ENCODE measurements at regions of chr9 and their contacts with region 1.

Region 1: GRCh38 chr9:90914868-90915483 is 113.4 kb downstream of the SYK start:
- DNase-seq: no peak
- H3K4me3 ChIP-seq: no peak overlapping the region
- CTCF ChIP-seq: peak; percentile 83

Region 2: GRCh38 chr9:90665072-90665471 is 249.9 kb before region 1 on chr9:
- CTCF ChIA-PET with region 1: no interaction called
- POLR2A ChIA-PET with region 1: no interaction called
- DNase-seq: no peak
- H3K4me3 ChIP-seq: no peak overlapping the region
- CTCF ChIP-seq: no peak

Region 3: GRCh38 chr9:90684736-90685135 is 230.2 kb before region 1 on chr9:
- CTCF ChIA-PET with region 1: no interaction called
- POLR2A ChIA-PET with region 1: no interaction called
- DNase-seq: no peak
- H3K4me3 ChIP-seq: no peak overlapping the region
- CTCF ChIP-seq: no peak

Region 4: GRCh38 chr9:90904714-90905478 is 10.1 kb before region 1 on chr9:
- CTCF ChIA-PET with region 1: interaction called, 24 read pairs
- POLR2A ChIA-PET with region 1: no interaction called
- DNase-seq: no peak
- H3K4me3 ChIP-seq: no peak overlapping the region
- CTCF ChIP-seq: no peak

Region 5: DNA sequence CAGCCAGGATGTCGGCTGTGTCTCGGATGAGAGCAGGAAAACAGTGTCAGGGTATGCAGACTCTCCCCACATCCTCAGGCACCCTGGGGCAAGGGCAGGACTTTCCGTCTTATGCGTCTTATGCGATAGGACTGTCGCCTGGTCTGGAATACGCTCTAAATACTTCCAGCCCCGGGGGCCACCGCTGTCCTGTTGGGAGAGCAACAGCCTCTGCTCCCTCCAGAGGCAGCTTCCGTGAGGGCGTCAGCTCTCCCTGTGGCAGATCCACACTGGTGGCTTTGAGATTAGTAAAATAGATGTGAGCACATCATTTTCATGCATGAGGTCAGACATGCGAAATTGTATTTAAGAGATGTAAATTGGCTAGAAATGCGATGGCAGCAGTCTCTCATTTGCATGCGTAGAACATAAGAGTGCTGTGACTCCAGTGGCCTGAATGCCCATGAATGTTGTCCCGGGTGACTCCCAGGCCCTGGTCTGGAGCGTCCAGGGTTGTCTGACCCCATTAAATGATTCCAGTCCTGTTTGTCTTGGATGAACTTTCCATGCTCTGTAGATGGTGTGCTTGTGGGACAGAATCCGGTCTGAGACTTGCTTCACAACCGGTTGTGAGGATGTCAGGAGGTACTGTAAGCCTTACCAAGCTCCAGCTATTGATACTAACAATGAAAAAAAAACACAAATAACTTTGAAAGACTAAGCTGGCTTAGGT is 114.8 kb after region 1 on chr9:
- CTCF ChIA-PET with region 1: interaction called, 28 read pairs
- POLR2A ChIA-PET with region 1: no interaction called
- DNase-seq: no peak
- H3K4me3 ChIP-seq: no peak overlapping the region
- CTCF ChIP-seq: no peak

Region 6: GRCh38 chr9:91422758-91423711 is 508.1 kb after region 1 on chr9:
- CTCF ChIA-PET with region 1: interaction called, 200 read pairs
- POLR2A ChIA-PET with region 1: no interaction called
- DNase-seq: no peak
- H3K4me3 ChIP-seq: peak overlapping the region; percentile 87
- CTCF ChIP-seq: peak; percentile 44

Region 7: DNA sequence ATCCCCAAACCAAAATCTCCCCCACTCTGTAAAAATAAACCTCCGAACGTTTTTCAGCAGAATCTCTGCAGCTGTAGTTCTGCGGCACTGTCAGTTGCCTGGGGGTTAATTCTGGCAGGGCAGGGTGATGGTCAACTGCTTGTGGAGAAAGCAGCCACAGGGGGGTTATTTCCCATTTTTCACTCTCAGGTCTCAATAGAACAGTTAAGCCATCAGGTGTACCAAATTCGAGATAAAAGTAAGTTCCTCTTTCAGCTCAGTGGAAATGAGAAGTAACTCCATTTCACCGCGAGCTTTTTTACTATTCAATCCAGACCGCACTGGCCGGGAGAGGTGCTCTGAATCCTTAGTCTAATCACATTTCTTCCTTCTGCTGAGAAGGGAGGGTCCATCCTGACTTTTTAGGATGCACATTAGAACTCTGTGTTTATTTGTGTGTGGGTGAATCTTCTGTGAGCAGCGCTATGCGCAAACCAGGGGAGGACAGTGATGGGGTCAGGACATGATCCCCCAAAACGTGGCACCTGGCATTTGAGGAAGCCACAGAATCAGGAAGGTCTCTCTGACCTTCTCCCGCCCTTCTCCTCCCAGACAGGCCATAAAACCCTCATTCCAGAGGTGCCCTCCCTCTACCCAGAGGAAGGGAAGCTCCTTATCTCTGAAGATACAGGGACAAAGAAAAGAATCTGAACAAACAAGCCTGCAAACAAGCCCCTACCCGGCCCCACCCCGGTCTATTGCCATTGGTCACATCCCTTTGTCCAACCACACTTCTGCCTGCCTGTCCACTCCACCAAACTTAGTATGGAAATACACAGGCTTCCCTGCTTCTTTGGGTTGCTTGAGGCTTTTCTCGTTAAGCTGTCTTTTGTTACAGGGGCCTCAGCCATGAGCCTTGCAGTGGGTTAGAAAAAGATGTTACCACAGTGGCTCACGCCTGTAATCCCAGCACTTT is 806.1 kb after region 1 on chr9:
- CTCF ChIA-PET with region 1: interaction called, 71 read pairs
- POLR2A ChIA-PET with region 1: no interaction called
- DNase-seq: no peak
- H3K4me3 ChIP-seq: no peak overlapping the region
- CTCF ChIP-seq: no peak

Region 8: DNA sequence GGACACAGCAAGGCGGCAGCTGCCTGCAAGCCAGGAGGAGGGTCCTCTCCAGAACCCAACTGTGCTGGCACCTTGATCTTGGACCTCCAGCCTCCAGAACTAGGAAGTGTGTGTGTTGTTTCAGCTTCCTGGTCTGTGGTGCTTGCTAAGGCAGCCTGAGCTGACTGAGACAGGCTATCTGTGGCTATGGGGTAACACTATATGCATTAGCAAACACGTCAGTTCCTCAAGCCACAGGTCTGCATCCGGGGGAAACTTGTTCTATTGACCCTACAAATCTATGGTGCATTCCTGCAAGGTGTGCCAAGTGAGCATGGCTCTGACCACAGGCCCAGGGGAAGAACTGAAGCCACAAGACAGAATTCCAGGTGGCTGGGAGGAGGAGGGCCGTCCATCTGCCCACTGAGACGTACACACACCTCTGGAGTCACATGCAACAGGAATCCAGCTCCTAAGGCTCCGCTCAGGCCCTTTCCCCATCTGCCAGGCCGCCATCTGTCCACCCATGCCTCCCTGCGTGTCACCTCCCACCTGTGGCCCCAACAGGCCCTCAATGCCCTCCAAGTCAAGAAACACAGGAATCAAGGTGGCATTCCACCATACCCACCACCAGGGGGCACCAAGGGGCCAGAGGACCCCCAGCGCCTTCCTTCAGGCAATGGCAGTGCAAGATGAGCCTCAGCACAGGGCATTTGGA is 860.2 kb after region 1 on chr9:
- CTCF ChIA-PET with region 1: interaction called, 14 read pairs
- POLR2A ChIA-PET with region 1: no interaction called
- DNase-seq: no peak
- H3K4me3 ChIP-seq: no peak overlapping the region
- CTCF ChIP-seq: peak; percentile 92